Tibial artery (tissue), 4 donors: ENCODE measurements at regions of chr19 and their contacts with region 1.

Region 1: DNA sequence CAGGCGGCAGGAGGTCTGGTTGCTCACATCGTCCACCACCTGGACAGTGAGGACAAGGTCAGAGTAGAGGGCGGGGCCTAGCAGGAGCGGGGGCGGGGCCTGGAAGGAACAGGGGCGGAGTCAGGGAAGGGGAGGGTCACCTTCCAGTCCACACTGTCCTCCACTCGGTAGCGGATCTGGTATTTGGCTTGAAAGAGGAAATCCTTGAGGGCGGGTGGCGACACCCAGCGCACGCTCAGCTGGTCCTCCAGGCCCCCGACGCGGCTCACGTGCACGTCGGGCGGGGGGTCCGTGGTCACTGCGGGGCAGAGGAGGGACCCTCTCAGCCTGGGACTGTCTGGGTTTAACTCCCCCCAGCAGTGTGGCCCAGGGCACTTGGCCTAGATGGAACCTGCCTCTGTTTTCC is 8.2 kb downstream of the REX1BD start:
- DNase-seq: peak; percentile 63 to 81
- H3K4me3 ChIP-seq: no peak overlapping the region
- H3K27ac ChIP-seq: no peak overlapping the region
- H3K4me1 ChIP-seq: peaks cover 0 to 22% (median 19%) of the 10 kb centered on the region in 4 donors
- H3K27me3 ChIP-seq: peaks cover 0 to 34% of the 10 kb centered on the region in 2 donors
- CTCF ChIP-seq: no peak

Region 2: GRCh38 chr19:18629166-18630088 is 32.7 kb after region 1 on chr19:
- intact Hi-C with region 1: no loop called
- DNase-seq: peak; percentile 78 to 80
- H3K4me3 ChIP-seq: no peak overlapping the region
- H3K27ac ChIP-seq: peak overlapping the region; percentile 47 to 48
- H3K4me1 ChIP-seq: peaks cover 0 to 18% (median 6%) of the 10 kb centered on the region in 4 donors
- H3K27me3 ChIP-seq: no peaks in the 10 kb centered on the region
- CTCF ChIP-seq: no peak

Region 3: DNA sequence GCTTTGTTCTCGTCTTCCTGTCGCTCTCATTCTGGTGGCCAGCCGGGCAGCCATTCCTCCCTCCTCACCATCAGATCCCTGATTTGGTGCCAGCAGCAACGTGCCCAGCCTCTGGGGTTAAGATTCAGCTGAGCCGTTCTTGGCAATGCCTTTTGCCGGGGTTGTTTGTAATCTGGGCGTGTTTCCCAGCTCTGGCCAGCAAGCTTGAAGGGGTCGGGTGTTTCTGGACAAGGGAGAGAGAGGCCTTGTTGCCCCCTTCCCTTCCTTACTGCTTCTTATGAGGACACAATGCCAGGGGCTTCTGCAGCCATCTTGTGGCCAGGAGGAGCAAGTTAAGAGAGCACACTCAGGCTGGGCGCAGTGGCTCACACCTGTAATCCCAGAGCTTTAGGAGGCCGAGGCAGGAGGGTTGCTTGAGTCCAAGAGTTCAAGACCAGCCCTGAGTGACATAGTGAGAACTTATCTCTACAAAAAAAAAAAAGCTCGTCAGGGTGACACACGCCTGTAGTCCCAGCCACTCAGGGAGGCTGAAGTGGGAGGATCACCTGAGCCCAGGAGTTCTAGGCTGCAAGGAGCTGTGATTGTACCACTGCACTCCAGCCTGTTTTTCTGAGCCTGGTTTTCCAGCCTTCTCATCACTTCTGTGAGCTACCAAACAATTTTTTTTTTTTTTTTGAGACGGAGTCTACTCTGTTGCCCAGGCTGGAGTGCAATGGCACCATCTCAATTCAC is 76.0 kb after region 1 on chr19:
- intact Hi-C with region 1: loop called (anchors 5 kb)
- DNase-seq: peak; percentile 71 to 94
- H3K4me3 ChIP-seq: peak overlapping the region; percentile 15 to 22
- H3K27ac ChIP-seq: peak overlapping the region; percentile 80 to 99
- H3K4me1 ChIP-seq: peaks cover 0 to 66% (median 39%) of the 10 kb centered on the region in 4 donors
- H3K27me3 ChIP-seq: no peaks in the 10 kb centered on the region
- CTCF ChIP-seq: peak; percentile 22 to 41